IMR-90 (cell line): ENCODE measurements at regions of chr3 and their contacts with region 1.

Region 1: DNA sequence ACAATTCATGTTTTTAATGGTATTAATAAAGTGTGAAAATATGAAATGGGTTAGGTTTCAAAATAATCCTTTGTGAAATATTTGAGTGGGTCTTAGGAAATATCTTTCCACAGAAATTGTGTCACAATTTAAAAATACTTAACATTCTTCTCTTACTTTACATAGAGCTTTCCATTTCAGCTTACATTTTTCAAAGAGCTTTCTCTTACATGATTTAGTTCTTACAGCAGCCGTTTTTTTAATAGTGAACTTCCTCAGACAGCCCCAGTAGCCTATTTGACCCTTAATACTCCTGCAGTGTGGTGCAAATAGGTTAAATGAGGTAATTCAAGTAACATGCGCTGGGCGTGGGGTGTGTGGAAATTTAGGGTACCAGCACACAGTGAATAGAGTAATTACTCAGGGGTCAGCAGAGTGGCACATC is 21.8 kb downstream of the P2RY12 start:
- DNase-seq: no peak
- ATAC-seq: peak; percentile 86
- H3K4me3 ChIP-seq: no peak overlapping the region
- H3K27ac ChIP-seq: no peak overlapping the region
- H3K4me1 ChIP-seq: peaks cover 5% of the 10 kb centered on the region
- H3K27me3 ChIP-seq: no peaks in the 10 kb centered on the region
- CTCF ChIP-seq: no peak
- POLR2A ChIP-seq: no peak
- RAD21 ChIP-seq: no peak

Region 2: GRCh38 chr3:151345859-151346258 is 16.9 kb before region 1 on chr3:
- CTCF ChIA-PET with region 1: no interaction called
- POLR2A ChIA-PET with region 1: no interaction called
- dilution Hi-C with region 1: no loop called
- in situ Hi-C with region 1: no loop called
- intact Hi-C with region 1: loop called (anchors 1 kb)
- DNase-seq: peak; percentile 82
- ATAC-seq: peak; percentile 91
- H3K4me3 ChIP-seq: peak overlapping the region; percentile 26; the same call in 1 of the 2 replicates
- H3K27ac ChIP-seq: no peak overlapping the region; the same call in 1 of the 2 replicates
- H3K4me1 ChIP-seq: peaks cover 3% of the 10 kb centered on the region; the same call in 1 of the 2 replicates
- H3K27me3 ChIP-seq: no peaks in the 10 kb centered on the region
- CTCF ChIP-seq: no peak
- POLR2A ChIP-seq: no peak
- RAD21 ChIP-seq: no peak